ENCODE measurements at regions of chr1 and their contacts with region 1.

Region 1: GRCh38 chr1:53959664-53960250 is 13.6 kb downstream of the LRRC42 start:
- DNase-seq: peak; percentile 57
- CTCF ChIP-seq: peak; percentile 27

Region 2: DNA sequence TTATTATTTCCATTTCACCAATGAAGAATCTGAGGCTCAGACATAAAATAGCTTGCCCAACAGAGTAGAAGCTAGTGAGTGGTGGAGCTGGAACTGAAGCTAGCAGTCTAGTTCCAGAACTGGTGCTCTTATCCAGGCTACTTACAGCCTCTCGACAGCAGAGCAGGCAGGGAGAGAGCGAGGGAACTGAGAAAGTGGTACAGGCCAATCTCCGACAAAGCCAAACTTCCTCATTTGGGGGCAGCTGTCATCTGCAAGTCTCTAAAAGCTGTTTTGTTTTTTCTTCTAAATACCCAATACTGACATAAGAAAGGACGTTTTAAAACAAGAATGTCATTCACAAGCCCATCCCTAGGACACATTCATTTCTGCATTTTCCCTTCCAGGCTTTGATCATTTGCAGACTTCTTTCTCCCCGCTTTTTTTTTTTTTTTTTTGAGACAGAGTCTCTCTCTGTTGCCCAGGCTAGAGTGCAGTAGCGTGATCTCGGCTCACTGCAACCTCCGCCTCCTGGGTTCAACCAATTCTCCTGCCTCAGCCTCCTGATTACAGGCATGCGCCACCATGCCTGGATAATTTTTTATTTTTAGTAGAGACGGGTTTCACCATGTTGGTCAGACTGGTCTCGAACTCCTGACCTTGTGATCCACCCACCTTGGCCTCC is 90.2 kb before region 1 on chr1:
- in situ Hi-C with region 1: loop called (anchors 5 kb)
- DNase-seq: no peak
- CTCF ChIP-seq: no peak

Region 3: GRCh38 chr1:54064299-54064698 is 104.5 kb after region 1 on chr1:
- in situ Hi-C with region 1: no loop called
- DNase-seq: no peak
- CTCF ChIP-seq: no peak

Region 4: DNA sequence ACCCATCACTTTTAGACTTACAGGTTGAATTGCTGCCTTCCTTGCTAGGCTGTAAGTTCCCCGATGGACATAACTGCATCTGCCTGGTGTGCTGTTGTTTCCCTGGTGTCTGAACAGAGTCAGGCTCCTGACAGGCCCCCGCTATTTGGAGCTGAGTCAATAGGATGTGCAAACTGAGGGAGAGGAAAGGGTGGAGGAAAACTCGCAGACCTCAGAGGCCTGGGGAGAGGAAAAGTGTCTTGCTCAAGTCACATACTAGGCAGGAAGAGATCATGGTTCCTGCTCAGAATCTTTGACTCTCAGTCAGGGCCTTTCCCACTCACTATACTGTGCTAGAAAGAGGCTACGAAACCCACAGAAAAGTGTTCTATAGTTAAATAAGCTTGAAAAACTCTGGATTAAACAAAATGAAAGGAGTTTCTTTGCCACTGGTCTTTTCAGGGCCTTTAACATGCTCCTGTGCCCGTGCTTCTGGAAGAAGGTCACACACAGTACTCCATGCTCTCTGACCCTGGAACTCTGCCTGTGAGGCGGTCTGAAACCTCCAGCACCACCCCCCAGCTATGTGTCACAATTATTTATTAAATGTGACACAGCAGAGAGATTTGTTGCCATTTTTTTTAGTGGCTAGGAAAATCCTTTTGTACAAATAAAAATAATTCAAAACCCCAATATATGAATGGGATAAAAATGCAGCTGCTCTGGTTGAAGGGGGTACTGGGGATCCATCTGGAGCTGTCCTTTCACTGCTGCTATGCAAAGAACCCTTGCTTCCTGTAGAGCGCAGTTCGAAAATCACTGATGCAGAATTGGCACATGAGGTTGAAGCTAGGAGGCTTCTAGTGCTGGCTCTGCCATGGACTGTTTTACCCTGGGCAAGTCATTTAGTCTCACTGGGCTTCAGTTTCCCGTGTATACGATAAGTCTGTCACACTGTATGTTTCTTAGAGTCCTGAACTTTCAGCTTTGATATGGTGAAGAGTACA is 213.2 kb after region 1 on chr1:
- in situ Hi-C with region 1: no loop called
- DNase-seq: no peak
- CTCF ChIP-seq: no peak

Measured in GM13976 (cell line).